Common myeloid progenitor, CD34-positive (primary cell): ENCODE measurements at regions of chr7 and their contacts with region 1.

Region 1: DNA sequence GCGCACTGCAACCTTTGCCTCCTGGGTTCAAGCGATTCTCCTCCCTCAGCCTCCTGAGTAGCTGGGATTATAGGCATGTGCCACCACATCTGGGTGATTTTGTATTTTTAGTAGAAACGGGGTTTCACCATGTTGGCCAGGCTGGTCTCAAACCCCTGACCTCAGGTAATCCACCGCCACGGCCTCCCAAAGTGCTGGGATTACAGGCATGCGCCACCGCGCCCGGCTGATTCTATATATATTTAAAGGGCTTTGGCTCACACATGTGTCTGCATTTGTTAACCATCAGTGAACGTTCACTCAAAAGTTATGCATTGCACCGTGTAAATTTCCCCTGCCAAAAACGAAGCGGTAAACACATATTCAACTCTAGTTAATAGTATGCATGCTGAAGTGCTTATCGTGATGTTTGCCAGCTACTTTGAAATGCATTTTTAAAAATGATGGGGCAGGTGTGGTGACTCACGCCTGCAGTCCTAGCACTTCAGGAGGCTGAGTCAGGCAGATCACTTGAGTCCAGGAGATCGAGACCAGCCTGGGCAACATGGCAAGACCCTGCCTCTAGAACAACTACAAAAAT is 17.7 kb upstream of the WIPI2 start:
- DNase-seq: no peak
- H3K4me3 ChIP-seq: no peak overlapping the region
- H3K27ac ChIP-seq: no peak overlapping the region
- H3K4me1 ChIP-seq: peaks cover 0 to 8% (median 4%) of the 10 kb centered on the region in 4 experiments
- H3K27me3 ChIP-seq: no peaks in the 10 kb centered on the region

Region 2: GRCh38 chr7:5064391-5065106 is 107.7 kb before region 1 on chr7:
- CTCF ChIA-PET with region 1: no interaction called
- POLR2A ChIA-PET with region 1: no interaction called
- DNase-seq: peak in 2 of 3 donors; percentile 30 to 52
- H3K4me3 ChIP-seq: peak overlapping the region in 1 of 7 experiments; percentile 22
- H3K27ac ChIP-seq: no peak overlapping the region
- H3K4me1 ChIP-seq: no peaks in the 10 kb centered on the region
- H3K27me3 ChIP-seq: no peaks in the 10 kb centered on the region

Region 3: DNA sequence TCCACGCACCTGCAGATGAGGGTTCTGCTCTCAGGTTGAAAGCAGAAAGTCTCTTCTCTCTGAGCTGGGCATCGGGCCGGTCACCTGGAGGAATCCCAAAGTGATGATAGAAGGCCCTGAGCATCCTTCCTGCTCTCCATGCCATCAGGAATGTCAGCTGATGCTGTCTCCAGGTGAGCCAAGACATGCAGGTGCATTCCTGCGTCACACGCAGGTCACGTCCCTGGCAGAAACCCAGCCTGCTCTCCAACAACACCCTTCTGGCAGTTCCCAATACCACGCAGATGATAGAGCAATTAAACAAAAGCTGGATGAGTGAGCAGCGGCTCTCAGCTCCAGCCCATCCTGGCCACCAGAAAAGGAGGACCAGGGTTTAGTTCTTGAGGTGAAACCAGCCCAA is 10.9 kb after region 1 on chr7:
- CTCF ChIA-PET with region 1: interaction called, 12 read pairs
- POLR2A ChIA-PET with region 1: no interaction called
- DNase-seq: no peak
- H3K4me3 ChIP-seq: no peak overlapping the region
- H3K27ac ChIP-seq: no peak overlapping the region
- H3K4me1 ChIP-seq: no peaks in the 10 kb centered on the region
- H3K27me3 ChIP-seq: peaks cover 0 to 3% (median 0%) of the 10 kb centered on the region in 5 experiments